ENCODE measurements at regions of chr20 and their contacts with region 1.

Region 1: DNA sequence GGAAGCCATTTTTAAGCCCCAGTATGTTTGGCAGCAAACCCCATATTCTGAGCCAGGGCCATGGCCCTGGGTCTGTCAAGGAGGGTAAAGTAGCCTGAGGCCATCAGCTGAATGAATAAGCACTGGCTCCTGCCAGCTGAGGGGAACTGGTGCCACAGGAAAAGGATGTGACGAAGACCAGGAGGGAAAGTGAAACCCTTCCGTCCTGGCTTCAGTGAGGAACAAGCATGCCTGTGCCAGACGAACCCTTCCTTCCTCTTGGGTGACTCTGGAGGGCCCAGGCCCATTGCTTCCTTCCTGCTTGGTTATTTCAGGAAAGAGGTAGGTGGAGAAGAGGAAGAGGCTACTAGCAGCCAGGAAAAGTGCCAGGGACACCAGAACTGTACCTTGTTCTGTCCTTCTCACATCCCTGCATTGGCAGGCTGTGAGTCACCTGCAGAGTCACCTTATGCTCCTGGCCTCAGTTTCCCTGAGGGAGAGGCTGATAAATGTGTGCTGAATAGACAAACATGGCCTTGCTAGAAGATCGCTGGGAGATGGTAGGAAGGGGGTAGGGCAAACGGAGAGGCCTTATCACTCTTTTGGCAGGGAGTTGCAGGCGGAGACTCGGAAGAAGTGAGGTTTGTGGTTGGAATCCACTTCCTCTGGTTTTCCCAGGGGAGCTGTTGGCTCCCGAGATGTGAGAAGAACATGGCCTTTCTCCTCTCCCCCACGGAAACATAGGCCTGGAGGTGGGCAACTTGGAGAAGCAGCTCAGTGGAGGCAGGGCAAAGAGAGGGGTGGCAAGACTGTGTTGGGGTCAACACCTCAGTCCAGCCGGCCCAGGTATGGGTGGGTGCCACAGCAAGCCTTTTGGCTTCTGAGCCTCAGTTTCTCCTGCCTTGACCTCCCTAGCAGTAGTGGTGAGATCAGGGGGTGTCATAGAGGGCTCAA is 37.4 kb downstream of the COX4I2 start:
- DNase-seq: no peak
- H3K4me3 ChIP-seq: peak overlapping the region in 1 of 4 donors; percentile 18
- H3K27ac ChIP-seq: peak overlapping the region; percentile 68 to 88 (median 82)
- H3K4me1 ChIP-seq: peaks cover 94 to 99% (median 95%) of the 10 kb centered on the region in 4 donors
- H3K27me3 ChIP-seq: no peaks in the 10 kb centered on the region
- CTCF ChIP-seq: no peak
- EP300 ChIP-seq: no peak
- POLR2A ChIP-seq: no peak

Region 2: GRCh38 chr20:31707994-31708735 is 33.0 kb after region 1 on chr20:
- intact Hi-C with region 1: loop called (anchors 5 kb)
- DNase-seq: no peak
- H3K4me3 ChIP-seq: no peak overlapping the region
- H3K27ac ChIP-seq: peak overlapping the region; percentile 41 to 93 (median 58)
- H3K4me1 ChIP-seq: peaks cover 79 to 96% (median 90%) of the 10 kb centered on the region in 4 donors
- H3K27me3 ChIP-seq: no peaks in the 10 kb centered on the region
- CTCF ChIP-seq: no peak
- EP300 ChIP-seq: no peak
- POLR2A ChIP-seq: no peak

Measured in esophagus muscularis mucosa (tissue), 4 donors.